ENCODE measurements at regions of chr1 and their contacts with region 1.

Region 1: GRCh38 chr1:203625628-203626019 is 1.0 kb upstream of the ATP2B4 start:
- DNase-seq: peak; percentile 75
- ATAC-seq: peak; percentile 30
- H3K4me3 Mint-ChIP-seq: peak overlapping the region; percentile 85
- H3K27ac Mint-ChIP-seq: peak overlapping the region; percentile 95
- H3K4me1 Mint-ChIP-seq: peaks cover 64% of the 10 kb centered on the region
- H3K27me3 Mint-ChIP-seq: no peaks in the 10 kb centered on the region

Region 2: DNA sequence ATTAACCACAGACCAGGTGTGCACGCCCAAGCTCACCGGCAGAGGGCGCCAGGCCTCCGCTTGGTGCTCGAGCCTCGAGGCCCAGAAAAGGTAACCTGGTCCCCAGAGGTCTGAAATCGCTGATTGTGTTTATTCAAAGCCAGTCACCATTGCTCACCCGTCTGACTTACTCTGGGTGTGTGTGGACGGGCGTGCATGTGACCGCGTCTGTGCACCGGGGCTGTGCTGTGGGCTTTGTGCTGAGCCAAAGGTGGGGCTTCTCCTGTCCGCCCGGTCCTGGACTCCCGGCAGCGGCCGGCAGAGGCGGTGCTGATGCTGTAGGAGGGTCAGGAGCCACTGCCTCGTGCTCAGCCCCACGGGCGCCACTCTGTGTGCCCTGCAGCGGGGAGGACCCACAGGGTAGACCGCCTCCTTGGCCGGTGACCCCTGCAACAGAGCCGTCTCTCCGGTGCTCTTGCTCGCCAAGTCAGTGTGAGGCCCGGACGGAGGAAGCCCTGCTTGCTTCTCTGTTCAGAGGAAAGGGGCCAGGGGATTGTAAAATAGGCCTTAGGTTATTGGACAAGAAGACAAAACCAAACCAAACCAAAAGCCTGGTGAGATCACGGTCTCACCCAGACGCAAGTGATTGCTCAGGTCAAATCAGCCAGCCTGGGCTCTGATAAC is 352.3 kb before region 1 on chr1:
- CTCF ChIA-PET with region 1: interaction called, 7 read pairs
- POLR2A ChIA-PET with region 1: no interaction called
- intact Hi-C with region 1: loop called (anchors 5 to 10 kb)
- DNase-seq: peak; percentile 96
- ATAC-seq: peak; percentile 78
- H3K4me3 Mint-ChIP-seq: peak overlapping the region; percentile 70
- H3K27ac Mint-ChIP-seq: peak overlapping the region; percentile 78
- H3K4me1 Mint-ChIP-seq: peaks cover 65% of the 10 kb centered on the region
- H3K27me3 Mint-ChIP-seq: no peaks in the 10 kb centered on the region

Region 3: GRCh38 chr1:203326830-203327683 is 298.6 kb before region 1 on chr1:
- CTCF ChIA-PET with region 1: no interaction called
- POLR2A ChIA-PET with region 1: no interaction called
- intact Hi-C with region 1: loop called in 1 of 2 experiments (anchors 5 kb)
- DNase-seq: peak; percentile 97
- ATAC-seq: peak; percentile 84
- H3K4me3 Mint-ChIP-seq: peak overlapping the region; percentile 72
- H3K27ac Mint-ChIP-seq: peak overlapping the region; percentile 96
- H3K4me1 Mint-ChIP-seq: peaks cover 66% of the 10 kb centered on the region
- H3K27me3 Mint-ChIP-seq: no peaks in the 10 kb centered on the region

Region 4: DNA sequence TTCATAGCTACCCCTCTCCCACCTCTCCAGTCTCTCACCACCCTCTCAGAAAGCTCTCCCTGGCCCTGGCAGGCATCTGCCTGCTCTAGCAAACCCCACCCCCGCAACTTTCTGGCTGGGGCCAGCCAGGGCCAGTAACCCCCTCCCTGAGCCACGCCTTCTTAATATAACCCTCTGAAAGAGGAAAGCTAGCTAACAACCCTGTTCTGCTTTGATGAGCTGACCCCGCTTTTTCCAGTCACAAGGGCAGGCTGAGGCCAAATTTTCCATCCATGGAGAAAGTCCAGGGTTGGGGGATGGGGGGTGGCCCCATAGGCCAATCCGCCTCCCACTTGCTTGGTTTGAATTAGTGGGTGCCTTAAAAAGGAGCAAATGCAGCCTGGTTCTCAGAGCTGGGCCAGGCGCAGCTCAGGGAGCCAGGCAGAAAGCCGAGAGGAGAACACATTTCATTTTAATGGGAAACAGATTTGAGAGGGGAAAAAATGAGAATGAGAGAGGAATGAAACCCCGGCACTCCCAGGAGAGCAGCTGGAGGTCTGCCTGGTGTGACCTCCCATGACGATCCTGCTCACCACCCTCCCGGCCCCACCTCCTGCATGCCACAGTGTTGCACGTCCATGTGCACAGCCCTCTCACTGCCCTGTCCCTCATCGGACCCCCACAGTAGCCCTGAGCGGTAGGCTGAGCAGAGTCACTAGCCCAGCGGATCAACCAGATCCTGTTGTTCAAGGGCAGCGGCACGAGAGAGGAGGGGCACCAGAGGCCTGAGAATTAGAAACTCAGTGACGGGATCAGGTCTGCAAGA is 69.4 kb before region 1 on chr1:
- CTCF ChIA-PET with region 1: no interaction called
- POLR2A ChIA-PET with region 1: no interaction called
- intact Hi-C with region 1: no loop called
- DNase-seq: no peak
- ATAC-seq: no peak
- H3K4me3 Mint-ChIP-seq: no peak overlapping the region
- H3K27ac Mint-ChIP-seq: no peak overlapping the region
- H3K4me1 Mint-ChIP-seq: no peaks in the 10 kb centered on the region
- H3K27me3 Mint-ChIP-seq: no peaks in the 10 kb centered on the region

Region 5: GRCh38 chr1:203609979-203610493 is 15.6 kb before region 1 on chr1:
- CTCF ChIA-PET with region 1: interaction called, 8 read pairs
- POLR2A ChIA-PET with region 1: interaction called, 14 read pairs
- intact Hi-C with region 1: loop called (anchors 1 kb)
- DNase-seq: no peak
- ATAC-seq: no peak
- H3K4me3 Mint-ChIP-seq: no peak overlapping the region
- H3K27ac Mint-ChIP-seq: peak overlapping the region; percentile 7
- H3K4me1 Mint-ChIP-seq: peaks cover 46% of the 10 kb centered on the region
- H3K27me3 Mint-ChIP-seq: no peaks in the 10 kb centered on the region

Region 6: GRCh38 chr1:203682473-203683383 is 57.1 kb after region 1 on chr1:
- CTCF ChIA-PET with region 1: interaction called, 7 read pairs
- POLR2A ChIA-PET with region 1: interaction called, 14 read pairs
- intact Hi-C with region 1: loop called in 1 of 2 experiments (anchors 2 kb)
- DNase-seq: peak; percentile 73
- ATAC-seq: peak; percentile 92
- H3K4me3 Mint-ChIP-seq: peak overlapping the region; percentile 32
- H3K27ac Mint-ChIP-seq: peak overlapping the region; percentile 80
- H3K4me1 Mint-ChIP-seq: peaks cover 37% of the 10 kb centered on the region
- H3K27me3 Mint-ChIP-seq: no peaks in the 10 kb centered on the region

Region 7: DNA sequence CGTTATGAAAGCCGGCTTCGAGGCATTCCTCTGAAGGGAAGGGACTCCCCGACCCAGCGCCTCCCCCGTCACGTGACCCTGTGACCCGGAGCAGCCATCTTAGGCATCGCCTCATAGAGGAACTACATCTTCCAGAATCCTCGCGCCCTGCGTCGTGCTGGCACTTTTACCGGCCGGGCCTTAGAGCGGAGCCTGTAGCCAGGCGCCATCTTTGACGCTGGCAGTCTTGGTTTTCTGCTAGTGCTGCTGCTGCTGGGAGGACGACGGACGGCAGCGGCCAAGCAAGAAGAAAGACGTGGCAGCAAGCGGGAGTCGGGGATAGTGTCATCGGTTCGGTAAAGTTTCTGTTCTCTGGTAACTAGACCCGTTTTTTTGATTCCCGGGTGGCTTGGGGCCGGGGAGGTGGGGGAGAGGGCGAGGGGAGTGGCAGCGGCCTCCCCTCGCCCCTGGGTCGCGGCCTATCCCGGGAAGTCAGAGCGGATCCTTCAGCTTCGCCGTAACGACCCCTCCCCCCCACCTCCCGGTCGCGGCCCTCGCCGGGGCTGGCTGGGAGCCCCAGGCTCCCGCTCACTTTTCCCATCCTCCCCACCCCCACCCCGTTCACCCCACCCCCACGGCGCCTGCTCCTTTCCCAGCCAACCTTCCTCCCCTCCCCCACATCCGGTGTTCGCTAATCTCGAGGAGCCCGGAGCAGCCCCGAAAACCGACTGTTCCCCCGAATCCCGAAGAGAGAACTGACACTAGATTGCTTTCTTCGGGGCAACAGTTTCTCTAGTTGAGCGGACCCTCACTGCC is 170.0 kb after region 1 on chr1 and contains the starts of genes ZBED6 and ZC3H11A:
- CTCF ChIA-PET with region 1: no interaction called
- POLR2A ChIA-PET with region 1: no interaction called
- intact Hi-C with region 1: loop called in 1 of 2 experiments (anchors 2 kb)
- DNase-seq: peak; percentile 99
- ATAC-seq: peak; percentile 99
- H3K4me3 Mint-ChIP-seq: peak within 1 kb of the TSS; percentile 86
- H3K27ac Mint-ChIP-seq: peak within 1 kb of the TSS; percentile 96
- H3K4me1 Mint-ChIP-seq: peaks cover 45% of the 10 kb centered on the region
- H3K27me3 Mint-ChIP-seq: no peaks in the 10 kb centered on the region
- total RNA-seq, gene ZBED6: 16.4 to 19.3 TPM
- total RNA-seq, gene ZC3H11A: 92.8 to 112 TPM

Region 8: DNA sequence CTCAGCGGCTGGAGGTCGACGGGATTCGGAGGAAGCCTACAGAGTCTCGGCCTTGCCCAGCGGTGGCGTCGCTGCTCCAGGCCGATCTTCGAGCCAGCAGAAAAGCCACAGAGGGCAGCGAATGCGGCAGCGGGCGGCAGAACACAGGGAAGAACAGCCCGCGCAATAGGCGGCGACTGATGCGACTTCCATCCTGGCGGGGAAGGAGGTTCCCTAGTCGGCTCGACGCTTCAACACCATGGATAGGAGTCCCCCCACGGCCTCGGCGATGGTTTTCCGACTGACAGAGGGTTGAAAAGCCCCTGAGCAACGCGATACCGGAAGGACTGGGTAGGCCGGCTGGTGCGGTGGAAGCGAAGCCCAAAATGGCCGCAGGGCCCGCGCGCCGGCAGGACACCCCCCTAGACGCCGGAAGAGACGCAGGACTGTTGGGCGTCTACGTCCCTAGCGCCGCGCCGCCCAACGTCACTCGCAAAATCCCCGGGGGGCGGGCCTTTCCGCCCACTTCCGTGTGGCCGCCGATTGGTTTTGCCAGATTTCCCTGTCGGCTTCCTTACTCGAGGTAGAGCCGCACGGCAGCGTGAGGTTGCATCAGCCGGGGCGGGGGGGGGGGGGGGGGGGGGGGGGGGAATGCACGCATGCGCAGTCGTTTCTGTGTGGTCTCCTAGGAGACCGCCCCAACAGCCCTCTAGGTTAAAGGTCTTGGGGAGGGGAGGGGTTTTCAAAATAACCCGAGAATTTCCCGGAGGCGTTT is 786.0 kb after region 1 on chr1 and contains the start of gene PPP1R15B:
- CTCF ChIA-PET with region 1: no interaction called
- POLR2A ChIA-PET with region 1: no interaction called
- intact Hi-C with region 1: loop called in 1 of 2 experiments (anchors 10 kb)
- DNase-seq: peak; percentile 98
- ATAC-seq: peak; percentile 92
- H3K4me3 Mint-ChIP-seq: peak within 1 kb of the TSS; percentile 98
- H3K27ac Mint-ChIP-seq: peak within 1 kb of the TSS; percentile 100
- H3K4me1 Mint-ChIP-seq: peaks cover 10% of the 10 kb centered on the region
- H3K27me3 Mint-ChIP-seq: no peaks in the 10 kb centered on the region
- total RNA-seq, gene PPP1R15B: 55.9 to 57.6 TPM